ENCODE measurements at regions of chr10 and their contacts with region 1.

Region 1: GRCh38 chr10:68331455-68332258 is at the start of gene HNRNPH3:
- DNase-seq: peak; percentile 92
- ATAC-seq: peak; percentile 83
- H3K4me3 ChIP-seq: peak within 1 kb of the TSS; percentile 89 to 90
- H3K27ac ChIP-seq: peak within 1 kb of the TSS; percentile 85
- H3K4me1 ChIP-seq: peaks cover 41 to 48% of the 10 kb centered on the region in 2 experiments
- H3K27me3 ChIP-seq: no peaks in the 10 kb centered on the region
- CTCF ChIP-seq: no peak
- POLR2A ChIP-seq: peak; percentile 97
- RAD21 ChIP-seq: no peak
- total RNA-seq, gene HNRNPH3: 126 TPM

Region 2: GRCh38 chr10:67849331-67850011 is 482.2 kb before region 1 on chr10:
- CTCF ChIA-PET with region 1: no interaction called
- POLR2A ChIA-PET with region 1: no interaction called
- RAD21 ChIA-PET with region 1: no interaction called
- intact Hi-C with region 1: loop called (anchors 10 kb)
- DNase-seq: peak; percentile 87
- ATAC-seq: peak; percentile 99
- H3K4me3 ChIP-seq: peak overlapping the region; percentile 88
- H3K27ac ChIP-seq: peak overlapping the region; percentile 64
- H3K4me1 ChIP-seq: 0 out of 4 replicates have a peak, but pooled peaks cover 0 to 2% of the 10 kb centered on the region in 2 experiments
- H3K27me3 ChIP-seq: no peaks in the 10 kb centered on the region
- CTCF ChIP-seq: no peak
- POLR2A ChIP-seq: peak; percentile 56
- RAD21 ChIP-seq: no peak

Region 3: DNA sequence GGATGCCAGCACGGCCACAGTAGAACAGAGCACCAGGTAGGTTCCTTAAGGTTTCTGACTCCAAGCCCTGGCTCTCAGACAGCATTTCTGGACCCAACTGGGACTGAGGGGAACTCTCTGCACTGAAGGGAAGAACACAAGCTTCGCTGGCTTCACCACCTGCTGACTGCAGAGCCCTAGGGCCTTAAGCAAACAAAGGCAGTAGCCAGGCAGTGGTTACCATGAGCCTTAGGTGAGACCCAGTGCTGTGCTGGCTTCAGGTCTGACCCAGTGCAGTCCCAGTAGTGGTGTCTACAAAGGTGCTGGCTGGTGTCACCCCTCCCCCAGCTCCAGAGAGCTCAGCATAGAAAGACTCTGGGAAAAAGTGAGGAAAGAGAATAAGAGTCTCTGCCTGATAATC is 387.7 kb before region 1 on chr10:
- CTCF ChIA-PET with region 1: no interaction called
- POLR2A ChIA-PET with region 1: no interaction called
- RAD21 ChIA-PET with region 1: no interaction called
- intact Hi-C with region 1: no loop called
- DNase-seq: no peak
- ATAC-seq: no peak
- H3K4me3 ChIP-seq: no peak overlapping the region
- H3K27ac ChIP-seq: no peak overlapping the region
- H3K4me1 ChIP-seq: no peaks in the 10 kb centered on the region
- H3K27me3 ChIP-seq: no peaks in the 10 kb centered on the region
- CTCF ChIP-seq: no peak
- POLR2A ChIP-seq: no peak
- RAD21 ChIP-seq: no peak

Region 4: GRCh38 chr10:68348265-68348741 is 16.6 kb after region 1 on chr10:
- CTCF ChIA-PET with region 1: no interaction called
- POLR2A ChIA-PET with region 1: interaction called, 11 read pairs
- RAD21 ChIA-PET with region 1: no interaction called
- intact Hi-C with region 1: no loop called
- DNase-seq: peak; percentile 28
- ATAC-seq: peak; percentile 76
- H3K4me3 ChIP-seq: no peak overlapping the region
- H3K27ac ChIP-seq: no peak overlapping the region
- H3K4me1 ChIP-seq: no peaks in the 10 kb centered on the region
- H3K27me3 ChIP-seq: no peaks in the 10 kb centered on the region
- CTCF ChIP-seq: peak; percentile 28 to 82 (median 74); a peak in 5 of 6 replicates
- POLR2A ChIP-seq: no peak
- RAD21 ChIP-seq: peak; percentile 58